Calu3 (cell line): ENCODE measurements at regions of chr7 and their contacts with region 1.

Region 1: GRCh38 chr7:45923290-45923689 is 2.2 kb upstream of the IGFBP3 start:
- DNase-seq: peak; percentile 95
- H3K4me3 Mint-ChIP-seq: peak overlapping the region; percentile 99
- H3K27ac Mint-ChIP-seq: peak overlapping the region; percentile 73
- H3K4me1 Mint-ChIP-seq: peaks cover 40% of the 10 kb centered on the region
- H3K27me3 Mint-ChIP-seq: no peaks in the 10 kb centered on the region
- CTCF ChIP-seq: peak; percentile 95

Region 2: GRCh38 chr7:45446195-45446944 is 476.9 kb before region 1 on chr7:
- CTCF ChIA-PET with region 1: no interaction called
- intact Hi-C with region 1: no loop called
- DNase-seq: peak; percentile 25
- H3K4me3 Mint-ChIP-seq: no peak overlapping the region
- H3K27ac Mint-ChIP-seq: no peak overlapping the region
- H3K4me1 Mint-ChIP-seq: peaks cover 8% of the 10 kb centered on the region
- H3K27me3 Mint-ChIP-seq: peaks cover 2% of the 10 kb centered on the region
- CTCF ChIP-seq: no peak

Region 3: DNA sequence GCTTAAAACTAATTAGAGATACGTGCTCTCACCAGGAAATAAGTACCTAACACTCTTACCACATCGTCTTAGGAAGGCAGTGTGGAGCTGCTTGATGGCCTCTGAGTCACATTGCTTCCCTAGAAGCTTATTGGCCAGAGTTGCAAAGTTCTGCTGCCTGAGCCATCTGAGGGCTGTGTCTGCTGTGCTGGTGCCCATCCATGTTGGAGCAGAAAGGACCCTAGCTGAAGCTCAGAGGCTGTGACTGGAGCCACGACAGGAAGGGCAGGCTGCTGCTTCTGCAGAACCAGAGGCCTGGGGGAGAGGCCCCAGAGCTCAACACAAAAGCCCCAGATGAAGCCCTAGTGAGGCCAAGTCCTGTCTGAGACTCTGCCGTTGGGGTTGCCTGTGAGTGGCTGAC is 62.6 kb after region 1 on chr7:
- CTCF ChIA-PET with region 1: interaction called, 47 read pairs
- intact Hi-C with region 1: no loop called
- DNase-seq: peak; percentile 52
- H3K4me3 Mint-ChIP-seq: no peak overlapping the region
- H3K27ac Mint-ChIP-seq: peak overlapping the region; percentile 29
- H3K4me1 Mint-ChIP-seq: peaks cover 31% of the 10 kb centered on the region
- H3K27me3 Mint-ChIP-seq: no peaks in the 10 kb centered on the region
- CTCF ChIP-seq: no peak

Region 4: DNA sequence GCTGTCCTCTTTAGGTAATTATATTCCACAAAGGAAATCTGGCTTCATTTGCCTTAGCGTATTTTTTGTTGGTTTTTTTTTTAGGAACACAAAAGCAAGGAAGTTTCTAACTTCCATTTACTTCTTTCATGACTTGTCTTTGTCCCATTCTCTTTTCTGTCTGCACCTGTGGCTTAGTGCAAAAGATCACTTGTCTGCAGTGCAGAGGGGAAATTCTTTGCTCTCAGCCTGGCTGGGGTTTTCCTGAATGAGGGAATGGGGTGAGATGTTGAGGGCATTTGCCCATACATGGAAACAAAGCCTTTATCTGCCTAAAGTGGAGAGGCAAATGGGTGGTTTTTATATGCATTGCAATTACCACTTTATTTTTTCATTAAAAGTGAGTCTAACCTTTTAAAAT is 358.9 kb after region 1 on chr7:
- CTCF ChIA-PET with region 1: interaction called, 3 read pairs
- intact Hi-C with region 1: loop called (anchors 2 kb)
- DNase-seq: peak; percentile 30
- H3K4me3 Mint-ChIP-seq: no peak overlapping the region
- H3K27ac Mint-ChIP-seq: no peak overlapping the region
- H3K4me1 Mint-ChIP-seq: peaks cover 47% of the 10 kb centered on the region
- H3K27me3 Mint-ChIP-seq: no peaks in the 10 kb centered on the region
- CTCF ChIP-seq: no peak

Region 5: DNA sequence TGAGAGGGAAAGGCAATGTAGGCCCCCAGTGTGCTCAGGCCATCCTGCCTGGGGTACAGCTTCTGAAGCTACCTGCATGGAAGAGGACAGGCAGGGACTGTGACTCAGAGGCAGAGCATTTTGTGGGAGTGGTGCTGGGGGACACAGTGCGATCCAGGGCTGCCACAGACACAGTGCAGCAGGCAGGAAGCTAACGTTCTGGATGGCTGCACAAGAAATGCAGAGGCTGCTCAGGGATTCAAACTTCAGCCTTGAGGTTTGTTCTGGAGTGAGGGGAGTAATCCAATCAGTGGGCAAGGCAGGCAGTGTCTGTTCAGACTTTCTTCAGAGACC is 645.8 kb after region 1 on chr7:
- CTCF ChIA-PET with region 1: interaction called, 4 read pairs
- intact Hi-C with region 1: loop called (anchors 2 kb)
- DNase-seq: peak; percentile 86
- H3K4me3 Mint-ChIP-seq: peak overlapping the region; percentile 56
- H3K27ac Mint-ChIP-seq: peak overlapping the region; percentile 75
- H3K4me1 Mint-ChIP-seq: peaks cover 94% of the 10 kb centered on the region
- H3K27me3 Mint-ChIP-seq: no peaks in the 10 kb centered on the region
- CTCF ChIP-seq: no peak

Region 6: GRCh38 chr7:47088329-47089067 is 1165.2 kb after region 1 on chr7:
- CTCF ChIA-PET with region 1: interaction called, 10 read pairs
- intact Hi-C with region 1: no loop called
- DNase-seq: peak; percentile 77
- H3K4me3 Mint-ChIP-seq: no peak overlapping the region
- H3K27ac Mint-ChIP-seq: no peak overlapping the region
- H3K4me1 Mint-ChIP-seq: no peaks in the 10 kb centered on the region
- H3K27me3 Mint-ChIP-seq: no peaks in the 10 kb centered on the region
- CTCF ChIP-seq: peak; percentile 98